CD14-positive monocyte (primary cell): ENCODE measurements at regions of chr5 and their contacts with region 1.

Region 1: GRCh38 chr5:172283020-172283861 is at the start of gene UBTD2:
- DNase-seq: peak; percentile 54 to 64 (median 59)
- H3K4me3 ChIP-seq: peak within 1 kb of the TSS; percentile 56 to 95 (median 83)
- H3K4me3 Mint-ChIP-seq: peak within 1 kb of the TSS; percentile 92 to 95
- H3K27ac ChIP-seq: peak within 1 kb of the TSS in 1 of 2 donors; percentile 68
- H3K27ac Mint-ChIP-seq: peak within 1 kb of the TSS; percentile 65 to 93 (median 79)
- H3K4me1 ChIP-seq: peaks cover 15 to 33% of the 10 kb centered on the region in 2 donors
- H3K4me1 Mint-ChIP-seq: peaks cover 21% of the 10 kb centered on the region
- H3K27me3 ChIP-seq: peaks cover 2 to 12% of the 10 kb centered on the region in 2 donors
- H3K27me3 Mint-ChIP-seq: peaks cover 8 to 20% (median 14%) of the 10 kb centered on the region in 3 donors
- CTCF ChIP-seq: peak; percentile 74
- polyA plus RNA-seq, gene UBTD2: 2.3 to 3.2 (median 2.6) TPM

Region 2: GRCh38 chr5:172006321-172007174 is 276.7 kb before region 1 on chr5 and contains the start of gene FBXW11:
- intact Hi-C with region 1: loop called in 1 of 2 experiments (anchors 5 kb)
- DNase-seq: peak; percentile 93 to 98 (median 96)
- H3K4me3 ChIP-seq: peak within 1 kb of the TSS; percentile 61 to 100 (median 93)
- H3K4me3 Mint-ChIP-seq: peak within 1 kb of the TSS; percentile 98 to 99
- H3K27ac ChIP-seq: peak within 1 kb of the TSS; percentile 92 to 97
- H3K27ac Mint-ChIP-seq: peak within 1 kb of the TSS; percentile 96 to 100 (median 99)
- H3K4me1 ChIP-seq: peaks cover 42 to 51% of the 10 kb centered on the region in 2 donors
- H3K4me1 Mint-ChIP-seq: peaks cover 42% of the 10 kb centered on the region
- H3K27me3 ChIP-seq: no peaks in the 10 kb centered on the region
- H3K27me3 Mint-ChIP-seq: no peaks in the 10 kb centered on the region
- CTCF ChIP-seq: no peak
- polyA plus RNA-seq, gene FBXW11: 15.0 to 24.5 (median 18.2) TPM

Region 3: GRCh38 chr5:172150514-172151425 is 132.5 kb before region 1 on chr5:
- intact Hi-C with region 1: no loop called
- DNase-seq: peak; percentile 96 to 98 (median 98)
- H3K4me3 ChIP-seq: peak overlapping the region in 1 of 3 experiments; percentile 51
- H3K4me3 Mint-ChIP-seq: peak overlapping the region; percentile 74 to 84
- H3K27ac ChIP-seq: peak overlapping the region; percentile 85 to 86
- H3K27ac Mint-ChIP-seq: peak overlapping the region; percentile 97 to 99 (median 99)
- H3K4me1 ChIP-seq: peaks cover 64 to 70% of the 10 kb centered on the region in 2 donors
- H3K4me1 Mint-ChIP-seq: peaks cover 69% of the 10 kb centered on the region
- H3K27me3 ChIP-seq: no peaks in the 10 kb centered on the region
- H3K27me3 Mint-ChIP-seq: peaks cover 0 to 2% (median 2%) of the 10 kb centered on the region in 3 donors
- CTCF ChIP-seq: no peak

Region 4: GRCh38 chr5:172188033-172188892 is 95.0 kb before region 1 on chr5 and contains the start of gene STK10:
- intact Hi-C with region 1: loop called (anchors 5 kb)
- DNase-seq: peak; percentile 82 to 91 (median 90)
- H3K4me3 ChIP-seq: peak within 1 kb of the TSS; percentile 84 to 97 (median 85)
- H3K4me3 Mint-ChIP-seq: peak within 1 kb of the TSS; percentile 99 to 100
- H3K27ac ChIP-seq: peak within 1 kb of the TSS; percentile 97
- H3K27ac Mint-ChIP-seq: peak within 1 kb of the TSS; percentile 95 to 100 (median 99)
- H3K4me1 ChIP-seq: peaks cover 34 to 38% of the 10 kb centered on the region in 2 donors
- H3K4me1 Mint-ChIP-seq: peaks cover 29% of the 10 kb centered on the region
- H3K27me3 ChIP-seq: no peaks in the 10 kb centered on the region
- H3K27me3 Mint-ChIP-seq: peaks cover 0 to 5% (median 1%) of the 10 kb centered on the region in 3 donors
- CTCF ChIP-seq: peak; percentile 92
- polyA plus RNA-seq, gene STK10: 21.5 to 180 (median 47.4) TPM